Dendritic cell treated with granulocyte-macrophage colony-stimulating factor and Interleukin-4, amounts not matched to agents 40 ng/mL and 50 ng/mL, for 4 days (primary cell): ENCODE measurements at regions of chr1 and their contacts with region 1.

Region 1: GRCh38 chr1:91511386-91511785 is 10.7 kb downstream of the CDC7 start:
- H3K4me3 Mint-ChIP-seq: no peak overlapping the region
- H3K27ac Mint-ChIP-seq: no peak overlapping the region
- H3K4me1 Mint-ChIP-seq: no peaks in the 10 kb centered on the region
- H3K27me3 Mint-ChIP-seq: no peaks in the 10 kb centered on the region

Region 2: GRCh38 chr1:91282695-91283420 is 228.5 kb before region 1 on chr1:
- intact Hi-C with region 1: loop called (anchors 5 kb)
- H3K4me3 Mint-ChIP-seq: no peak overlapping the region
- H3K27ac Mint-ChIP-seq: no peak overlapping the region
- H3K4me1 Mint-ChIP-seq: no peaks in the 10 kb centered on the region
- H3K27me3 Mint-ChIP-seq: no peaks in the 10 kb centered on the region

Region 3: GRCh38 chr1:91883470-91883869 is 372.1 kb after region 1 on chr1:
- intact Hi-C with region 1: loop called (anchors 1 kb)
- H3K4me3 Mint-ChIP-seq: no peak overlapping the region
- H3K27ac Mint-ChIP-seq: no peak overlapping the region
- H3K4me1 Mint-ChIP-seq: peaks cover 16% of the 10 kb centered on the region
- H3K27me3 Mint-ChIP-seq: peaks cover 60% of the 10 kb centered on the region

Region 4: GRCh38 chr1:91929250-91929649 is 417.9 kb after region 1 on chr1:
- intact Hi-C with region 1: loop called (anchors 2 kb)
- H3K4me3 Mint-ChIP-seq: no peak overlapping the region
- H3K27ac Mint-ChIP-seq: no peak overlapping the region
- H3K4me1 Mint-ChIP-seq: no peaks in the 10 kb centered on the region
- H3K27me3 Mint-ChIP-seq: no peaks in the 10 kb centered on the region